Ascending aorta (tissue), 2 donors: ENCODE measurements at regions of chr6 and their contacts with region 1.

Region 1: DNA sequence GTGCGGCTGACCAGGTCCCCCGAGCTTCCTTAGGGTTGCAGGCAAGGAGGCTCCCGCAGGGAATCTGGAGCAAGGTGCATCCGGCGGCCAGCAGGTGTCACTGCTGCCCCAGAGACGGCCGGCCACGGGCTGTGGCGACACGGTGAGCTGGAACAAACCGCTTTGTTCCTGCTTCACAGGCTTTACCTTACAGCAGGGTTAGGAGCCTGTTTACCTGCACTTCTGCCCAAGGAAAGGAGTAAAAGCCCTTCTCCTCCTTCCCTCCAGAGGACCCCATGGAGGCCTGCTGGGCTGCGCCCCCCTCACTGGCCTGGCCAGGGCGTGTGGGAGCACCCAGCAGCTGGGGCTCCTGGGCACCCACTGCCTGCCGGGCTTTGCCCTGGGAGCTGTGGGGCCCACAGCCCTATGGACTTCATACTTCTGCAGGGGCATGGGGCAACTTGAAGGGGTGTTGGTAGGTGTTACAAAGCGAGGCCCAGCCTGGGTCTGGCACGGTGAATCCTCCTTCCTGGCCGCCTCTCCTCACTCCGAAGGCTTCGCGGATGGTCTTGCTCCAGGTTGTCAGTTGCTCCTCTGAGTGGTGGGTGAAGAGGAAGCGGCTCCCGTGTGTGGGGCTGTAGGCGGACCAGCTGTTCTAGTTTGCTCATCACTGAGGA is 88.4 kb downstream of the CDC5L start:
- DNase-seq: peak in 1 of 2 donors; percentile 75
- H3K4me3 ChIP-seq: no peak overlapping the region
- H3K27ac ChIP-seq: no peak overlapping the region
- H3K4me1 ChIP-seq: peaks cover 0 to 2% of the 10 kb centered on the region in 2 donors
- H3K27me3 ChIP-seq: no peaks in the 10 kb centered on the region
- CTCF ChIP-seq: peak; percentile 87 to 96 (median 92)

Region 2: GRCh38 chr6:44642870-44643529 is 167.1 kb after region 1 on chr6:
- intact Hi-C with region 1: loop called (anchors 10 kb)
- DNase-seq: no peak
- H3K4me3 ChIP-seq: no peak overlapping the region
- H3K27ac ChIP-seq: no peak overlapping the region
- H3K4me1 ChIP-seq: no peaks in the 10 kb centered on the region
- H3K27me3 ChIP-seq: no peaks in the 10 kb centered on the region
- CTCF ChIP-seq: no peak

Region 3: GRCh38 chr6:45714741-45715507 is 1239.0 kb after region 1 on chr6:
- intact Hi-C with region 1: loop called (anchors 1 kb)
- DNase-seq: peak in 1 of 2 donors; percentile 66
- H3K4me3 ChIP-seq: peak overlapping the region in 1 of 2 donors; percentile 17
- H3K27ac ChIP-seq: no peak overlapping the region
- H3K4me1 ChIP-seq: peaks cover 0 to 3% of the 10 kb centered on the region in 2 donors
- H3K27me3 ChIP-seq: no peaks in the 10 kb centered on the region
- CTCF ChIP-seq: peak; percentile 51 to 69 (median 52)

Region 4: GRCh38 chr6:45930420-45931040 is 1454.6 kb after region 1 on chr6:
- intact Hi-C with region 1: loop called (anchors 5 kb)
- DNase-seq: peak in 1 of 2 donors; percentile 73
- H3K4me3 ChIP-seq: no peak overlapping the region
- H3K27ac ChIP-seq: no peak overlapping the region
- H3K4me1 ChIP-seq: no peaks in the 10 kb centered on the region
- H3K27me3 ChIP-seq: no peaks in the 10 kb centered on the region
- CTCF ChIP-seq: peak; percentile 68 to 90 (median 85)